PC-9 (cell line): ENCODE measurements at regions of chr17 and their contacts with region 1.

Region 1: DNA sequence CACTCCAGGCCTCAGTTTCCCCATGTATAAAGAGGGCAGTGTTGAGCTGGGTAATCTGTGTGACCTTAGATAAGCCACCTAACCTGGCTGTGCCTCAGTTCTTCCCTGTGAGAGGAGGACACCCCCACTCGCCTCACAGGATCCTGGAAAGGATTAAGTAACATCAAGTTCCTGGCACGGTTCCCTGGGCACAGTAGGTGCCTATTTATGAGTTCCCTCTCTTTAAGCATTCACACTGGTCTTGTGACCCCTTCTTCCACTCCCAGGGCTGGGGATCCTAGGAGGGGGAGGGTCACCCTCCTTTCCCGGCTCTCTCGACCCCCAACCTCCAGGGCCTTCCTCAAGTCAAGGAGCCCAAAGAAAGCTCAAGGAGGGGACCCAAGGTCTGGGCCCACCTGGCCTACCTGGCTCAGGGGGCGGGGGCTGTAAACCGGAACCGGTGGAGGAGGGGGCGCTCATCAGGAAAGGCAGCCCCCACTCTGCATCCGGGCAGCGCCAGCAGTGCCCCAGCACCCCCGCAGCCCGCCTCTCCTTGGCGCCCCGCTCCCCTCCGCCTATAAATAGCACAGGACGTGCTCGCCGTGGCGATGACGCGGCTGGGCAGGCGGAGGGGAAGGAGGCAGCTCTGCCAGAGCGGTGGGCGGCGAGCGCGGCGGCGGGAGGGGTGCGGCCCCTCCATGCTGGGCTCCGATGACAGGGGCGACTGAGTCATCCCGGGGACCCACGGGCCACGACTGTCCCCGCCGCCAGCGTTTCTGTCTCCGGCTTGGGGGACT is 9.4 kb downstream of the RPL19 start:
- DNase-seq: no peak
- H3K4me3 ChIP-seq: no peak overlapping the region
- H3K27ac ChIP-seq: no peak overlapping the region
- H3K4me1 ChIP-seq: no peaks in the 10 kb centered on the region
- H3K27me3 ChIP-seq: no peaks in the 10 kb centered on the region
- CTCF ChIP-seq: no peak

Region 2: DNA sequence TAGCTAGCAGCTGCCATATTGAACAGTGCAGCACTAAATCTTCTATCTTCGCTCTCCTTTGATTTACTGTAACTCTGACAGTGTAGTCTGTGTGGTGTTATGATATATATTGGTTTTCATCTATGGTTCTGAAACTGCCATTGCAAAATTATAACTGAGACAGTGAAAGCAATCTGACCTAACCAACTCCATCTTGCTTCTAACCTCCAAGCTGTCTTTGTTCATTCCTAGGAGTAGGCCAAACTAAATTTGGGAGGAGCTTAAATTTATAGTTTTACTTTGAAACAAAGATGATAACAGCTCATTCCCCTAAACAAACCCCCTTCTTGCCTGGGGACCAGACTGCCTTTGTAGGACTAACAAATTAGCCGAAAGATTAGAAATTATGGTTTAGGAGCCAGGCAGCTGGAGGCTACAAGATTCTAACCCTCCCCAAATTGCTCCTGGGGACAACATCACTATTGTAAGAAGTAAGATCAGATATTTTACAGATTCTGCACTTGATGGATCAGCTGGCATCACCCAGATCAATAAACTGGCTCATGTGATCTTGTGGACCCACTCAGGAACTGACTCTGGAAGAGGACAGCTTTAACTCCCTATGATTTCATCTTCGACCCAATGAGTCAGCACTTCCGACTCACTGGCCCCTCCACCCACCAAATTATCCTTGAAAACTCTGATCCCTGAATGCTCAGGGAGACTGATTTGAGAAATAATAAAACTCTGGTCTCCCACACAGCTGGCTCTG is 195.3 kb before region 1 on chr17:
- CTCF ChIA-PET with region 1: no interaction called
- POLR2A ChIA-PET with region 1: no interaction called
- intact Hi-C with region 1: no loop called
- DNase-seq: no peak
- H3K4me3 ChIP-seq: no peak overlapping the region
- H3K27ac ChIP-seq: peak overlapping the region; percentile 49
- H3K4me1 ChIP-seq: peaks cover 29% of the 10 kb centered on the region
- H3K27me3 ChIP-seq: no peaks in the 10 kb centered on the region
- CTCF ChIP-seq: no peak

Region 3: GRCh38 chr17:39235555-39236449 is 26.3 kb after region 1 on chr17:
- CTCF ChIA-PET with region 1: interaction called, 9 read pairs
- POLR2A ChIA-PET with region 1: no interaction called
- intact Hi-C with region 1: loop called (anchors 1 kb)
- DNase-seq: no peak
- H3K4me3 ChIP-seq: no peak overlapping the region
- H3K27ac ChIP-seq: no peak overlapping the region
- H3K4me1 ChIP-seq: peaks cover 13% of the 10 kb centered on the region
- H3K27me3 ChIP-seq: no peaks in the 10 kb centered on the region
- CTCF ChIP-seq: peak; percentile 83

Region 4: GRCh38 chr17:39404542-39405378 is 195.3 kb after region 1 on chr17:
- CTCF ChIA-PET with region 1: no interaction called
- POLR2A ChIA-PET with region 1: no interaction called
- intact Hi-C with region 1: no loop called
- DNase-seq: peak in 1 of 2 experiments; percentile 75
- H3K4me3 ChIP-seq: no peak overlapping the region
- H3K27ac ChIP-seq: peak overlapping the region; percentile 71
- H3K4me1 ChIP-seq: peaks cover 27% of the 10 kb centered on the region
- H3K27me3 ChIP-seq: no peaks in the 10 kb centered on the region
- CTCF ChIP-seq: no peak